Gastrocnemius medialis (tissue), 4 donors: ENCODE measurements at regions of chr12 and their contacts with region 1.

Region 1: DNA sequence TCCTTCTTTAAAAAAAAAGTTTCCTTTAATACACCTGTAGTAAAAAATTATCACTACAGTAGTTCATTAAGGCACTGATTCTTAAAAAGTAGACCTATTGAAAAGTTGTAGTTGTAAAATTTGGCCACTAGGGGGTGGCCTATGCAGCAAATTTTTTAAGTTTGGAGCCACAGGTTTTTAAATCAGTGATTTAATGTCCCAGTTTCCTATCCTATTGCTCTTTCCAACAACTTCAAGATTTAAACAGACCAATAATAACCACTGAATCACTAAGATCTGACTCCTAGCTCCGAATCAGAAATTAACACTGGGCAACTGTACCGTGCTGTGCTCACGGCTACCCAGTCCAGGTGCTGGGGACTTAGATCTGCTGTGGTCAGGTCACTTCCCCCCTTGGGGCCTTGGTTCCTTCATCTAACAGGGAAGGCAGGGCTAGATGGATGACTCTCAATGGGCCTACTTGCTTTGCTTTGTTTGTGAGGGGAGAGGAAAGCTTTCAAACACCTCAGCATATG is 279.3 kb downstream of the MED13L start:
- DNase-seq: no peak
- ATAC-seq: peak; percentile 51 to 62
- H3K4me3 ChIP-seq: no peak overlapping the region
- H3K27ac ChIP-seq: peak overlapping the region; percentile 37 to 51 (median 44)
- H3K4me1 ChIP-seq: peaks cover 24 to 25% of the 10 kb centered on the region in 2 donors
- H3K27me3 ChIP-seq: no peaks in the 10 kb centered on the region
- CTCF ChIP-seq: peak; percentile 70 to 85 (median 78)
- POLR2A ChIP-seq: no peak

Region 2: DNA sequence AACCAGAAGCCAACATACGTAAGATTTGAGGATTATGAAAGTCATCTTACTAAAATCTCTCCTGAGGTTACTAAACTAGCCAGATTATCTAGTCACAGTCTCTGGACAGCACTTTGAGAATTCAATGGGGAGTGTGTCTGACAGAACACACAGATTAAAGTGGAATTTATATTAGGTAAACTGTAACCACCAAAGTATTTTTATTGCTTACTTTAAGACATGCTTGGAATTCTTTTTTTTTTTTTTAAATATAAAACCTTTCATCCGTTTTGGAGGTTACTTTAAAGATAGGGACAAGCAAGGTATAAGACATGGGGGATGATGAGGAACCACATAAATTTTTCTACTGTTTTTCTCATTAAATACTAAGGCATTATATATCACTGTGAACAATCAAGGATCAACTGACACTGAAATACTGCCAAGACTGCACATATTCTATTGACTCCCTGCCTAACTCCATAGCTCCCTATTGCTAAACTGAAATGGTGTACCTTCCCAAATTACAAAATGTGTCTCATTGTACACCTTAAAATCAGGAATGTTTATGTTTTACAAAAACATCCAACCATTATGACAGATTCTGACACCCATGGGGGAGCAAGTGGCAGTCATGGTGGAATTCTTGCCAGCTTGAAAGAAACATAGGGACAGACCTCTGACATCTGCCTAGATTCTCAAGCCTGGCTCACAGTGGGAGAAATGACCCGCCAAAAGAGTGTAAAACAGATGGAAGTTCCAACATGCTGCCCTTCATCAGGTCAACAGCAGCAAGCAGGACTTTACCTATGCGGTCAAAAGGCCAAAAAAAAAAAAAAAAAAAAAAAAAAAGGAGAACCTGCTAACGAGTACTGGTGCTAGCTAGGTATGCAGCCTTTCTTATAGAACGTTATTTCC is 40.0 kb after region 1 on chr12:
- in situ Hi-C with region 1: no loop called
- intact Hi-C with region 1: no loop called
- DNase-seq: no peak
- ATAC-seq: no peak
- H3K4me3 ChIP-seq: no peak overlapping the region
- H3K27ac ChIP-seq: no peak overlapping the region
- H3K4me1 ChIP-seq: peaks cover 39 to 49% of the 10 kb centered on the region in 2 donors
- H3K27me3 ChIP-seq: no peaks in the 10 kb centered on the region
- CTCF ChIP-seq: no peak
- POLR2A ChIP-seq: no peak

Region 3: DNA sequence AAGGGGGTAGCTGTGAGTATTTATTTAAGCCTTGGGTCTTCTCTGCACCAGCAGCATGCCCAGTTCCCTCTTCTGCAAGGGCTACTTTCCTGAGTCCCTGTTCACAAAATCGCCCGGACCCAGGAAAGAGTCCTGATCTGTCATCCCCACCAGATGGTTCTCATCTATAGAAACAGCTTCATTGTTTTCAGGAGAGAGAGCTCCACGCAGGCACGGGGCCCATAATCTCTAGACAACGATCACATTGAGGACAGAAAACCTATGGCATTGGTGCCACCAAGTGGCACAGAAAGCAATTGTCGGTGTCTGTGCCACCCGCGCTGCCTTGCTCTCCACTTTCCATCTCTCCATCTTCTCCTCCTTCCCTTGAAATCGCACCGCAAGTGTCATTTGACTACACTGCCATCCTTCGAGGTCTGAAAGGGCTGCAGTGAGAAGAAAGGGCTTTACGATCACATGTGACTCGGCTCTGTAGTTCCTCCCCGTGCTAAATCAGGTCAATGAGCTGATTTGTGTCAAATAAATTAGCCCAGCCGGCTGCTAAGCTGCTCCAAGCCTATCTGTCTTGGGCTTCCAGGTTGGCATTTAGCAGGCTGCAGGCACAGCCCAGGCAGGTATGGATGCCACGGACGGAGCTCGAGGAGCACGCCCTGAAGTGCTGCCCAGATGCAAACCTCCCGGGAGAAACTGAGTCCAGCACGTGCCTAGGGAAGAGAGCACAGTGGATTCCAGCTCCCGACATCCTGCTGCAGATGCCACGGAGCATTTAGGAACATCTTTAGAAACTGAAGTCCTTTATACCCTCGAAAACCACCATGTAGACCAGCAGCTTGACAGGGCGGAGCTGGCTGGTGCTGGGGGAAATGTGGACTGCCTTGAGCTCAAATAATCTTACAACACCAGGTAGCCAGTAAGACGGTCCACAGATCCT is 710.9 kb after region 1 on chr12:
- in situ Hi-C with region 1: loop called (anchors 10 to 25 kb)
- intact Hi-C with region 1: loop called (anchors 5 kb)
- DNase-seq: peak in 1 of 2 donors; percentile 33
- ATAC-seq: peak; percentile 82 to 88
- H3K4me3 ChIP-seq: peak overlapping the region in 2 of 4 donors; percentile 3 to 4
- H3K27ac ChIP-seq: no peak overlapping the region
- H3K4me1 ChIP-seq: peaks cover 15 to 23% of the 10 kb centered on the region in 2 donors
- H3K27me3 ChIP-seq: no peaks in the 10 kb centered on the region
- CTCF ChIP-seq: peak; percentile 25 to 63 (median 39)
- POLR2A ChIP-seq: no peak